Lower leg skin (tissue), 4 donors: ENCODE measurements at regions of chr22 and their contacts with region 1.

Region 1: GRCh38 chr22:38276166-38276565 is 3.4 kb upstream of the TMEM184B start:
- DNase-seq: no peak
- H3K4me3 ChIP-seq: no peak overlapping the region
- CTCF ChIP-seq: no peak
- POLR2A ChIP-seq: no peak

Region 2: GRCh38 chr22:38313384-38313955 is 37.3 kb after region 1 on chr22:
- intact Hi-C with region 1: loop called (anchors 5 kb)
- DNase-seq: peak in 1 of 2 donors; percentile 93
- H3K4me3 ChIP-seq: no peak overlapping the region
- CTCF ChIP-seq: no peak
- POLR2A ChIP-seq: no peak